GM13976 (cell line): ENCODE measurements at regions of chr9 and their contacts with region 1.

Region 1: DNA sequence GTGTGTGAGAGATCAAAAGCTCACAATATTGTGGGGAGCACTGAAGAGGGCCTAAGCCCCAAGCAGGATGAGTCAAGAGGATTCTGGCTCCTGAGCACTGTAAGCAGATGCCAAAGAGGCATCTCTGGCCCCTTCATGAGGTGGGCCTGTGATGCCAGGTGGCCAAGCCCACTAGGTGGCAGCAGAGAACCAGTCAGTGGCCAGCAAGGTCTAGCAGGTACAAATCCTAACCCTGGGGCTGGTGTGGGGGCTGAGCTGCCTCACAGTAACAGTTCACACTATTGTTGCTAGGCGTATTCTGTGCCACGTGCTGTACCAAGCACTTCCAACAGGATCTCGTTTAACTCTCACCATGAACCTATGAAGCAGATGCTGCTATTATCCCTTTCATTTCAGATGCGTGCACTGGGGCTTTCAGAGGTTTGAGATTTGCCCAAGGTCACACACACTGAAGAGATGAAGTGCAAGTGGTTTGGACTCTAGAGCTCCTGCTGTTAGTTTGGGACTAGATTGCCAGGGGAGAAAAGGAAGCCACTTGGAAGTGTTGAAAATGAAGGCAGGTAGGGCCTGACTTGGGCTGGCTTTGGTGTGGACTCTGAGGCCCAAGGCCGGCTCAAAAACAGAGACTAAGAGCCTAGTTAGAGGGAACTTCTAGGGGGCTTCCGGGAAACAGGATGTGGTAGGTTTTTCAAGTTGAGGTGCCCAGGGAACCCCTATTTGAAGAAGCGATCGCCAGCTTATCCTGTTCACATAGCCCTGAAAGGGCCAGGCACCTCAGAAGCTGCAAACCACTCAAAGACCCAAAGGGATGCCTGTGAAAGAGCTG is 4.4 kb upstream of the MLANA start:
- DNase-seq: peak; percentile 84
- CTCF ChIP-seq: peak; percentile 86

Region 2: DNA sequence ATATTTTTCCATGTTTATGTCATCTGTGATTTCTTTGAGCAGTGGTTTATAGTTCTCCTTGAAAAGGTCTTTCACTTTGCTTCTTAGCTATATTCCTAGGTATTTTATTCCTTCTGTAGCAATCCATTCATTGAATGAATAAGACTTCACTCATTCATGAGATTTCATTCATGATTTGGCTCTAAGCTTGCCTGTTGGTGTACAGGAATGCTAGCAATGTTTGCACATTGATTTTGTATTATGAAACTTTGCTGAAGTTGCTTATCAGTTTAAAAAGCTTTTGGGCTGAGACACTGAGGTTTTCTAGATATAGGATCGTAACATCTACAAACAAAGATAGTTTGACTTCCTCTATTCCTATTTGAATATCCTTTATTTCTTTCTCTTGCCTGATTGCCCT is 597.7 kb before region 1 on chr9:
- in situ Hi-C with region 1: no loop called
- DNase-seq: no peak
- CTCF ChIP-seq: no peak

Region 3: DNA sequence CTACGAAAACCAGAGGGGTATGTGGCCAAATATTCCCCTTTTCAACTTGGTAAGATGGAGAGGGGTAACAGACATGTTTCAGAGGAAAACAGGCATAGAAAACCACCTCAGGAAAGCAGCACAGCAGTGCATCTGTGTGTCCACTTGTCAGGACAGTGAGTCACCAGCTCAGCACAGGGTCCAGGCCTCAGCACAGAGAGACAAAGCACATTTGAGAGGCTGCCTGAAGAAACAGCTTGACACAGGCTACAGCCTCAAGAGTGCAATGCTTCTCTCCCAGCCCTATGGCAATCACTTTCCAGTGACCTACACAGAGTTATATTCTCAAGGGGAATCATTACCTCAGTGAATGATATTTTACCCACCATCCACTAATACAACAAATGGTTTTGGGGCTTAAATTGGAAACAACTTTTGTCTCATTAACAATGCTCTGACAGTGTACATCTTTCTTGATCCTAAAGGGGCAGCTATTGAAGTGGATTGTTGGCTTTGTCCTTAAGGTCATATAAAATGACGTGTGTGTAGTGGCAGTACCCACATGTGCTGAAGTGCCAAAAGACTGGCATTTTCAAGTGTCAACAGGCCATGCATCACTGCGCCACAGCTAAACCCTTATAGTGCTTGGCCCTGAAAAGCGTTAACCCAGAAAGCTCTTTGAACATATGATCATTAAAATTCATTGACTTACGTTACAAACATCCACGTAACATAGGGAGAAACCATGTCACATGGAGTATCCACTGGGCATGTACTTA is 99.8 kb before region 1 on chr9:
- in situ Hi-C with region 1: no loop called
- DNase-seq: no peak
- CTCF ChIP-seq: no peak

Region 4: DNA sequence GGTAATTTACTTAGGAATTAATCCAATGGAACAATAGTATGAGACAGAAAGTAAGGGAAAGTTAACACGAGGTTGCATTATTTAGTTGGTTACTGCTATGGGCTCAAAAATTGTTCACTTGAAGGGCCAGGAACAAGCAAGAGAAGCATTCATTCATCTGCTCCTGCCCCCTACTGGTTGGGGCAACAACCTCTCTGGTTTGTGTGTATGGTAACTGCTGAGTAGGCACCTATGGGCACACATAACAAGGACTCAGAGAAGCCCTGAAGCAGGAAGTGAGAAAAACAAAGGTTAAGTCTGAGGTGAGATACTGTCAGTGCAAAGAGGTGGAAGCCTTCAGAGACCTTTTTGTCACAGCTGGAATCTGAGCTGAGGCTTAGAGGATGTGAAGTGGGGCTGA is 163.5 kb after region 1 on chr9:
- in situ Hi-C with region 1: loop called (anchors 5 kb)
- DNase-seq: peak; percentile 21
- CTCF ChIP-seq: peak; percentile 24